ENCODE measurements at regions of chr20 and their contacts with region 1.

Region 1: GRCh38 chr20:63657937-63658748 is at the start of gene RTEL1:
- DNase-seq: peak; percentile 98
- total RNA-seq, gene RTEL1: 28.3 to 28.7 TPM

Region 2: GRCh38 chr20:63678667-63679427 is 20.7 kb after region 1 on chr20:
- intact Hi-C with region 1: loop called in 1 of 2 experiments (anchors 1 kb)
- DNase-seq: no peak

Region 3: DNA sequence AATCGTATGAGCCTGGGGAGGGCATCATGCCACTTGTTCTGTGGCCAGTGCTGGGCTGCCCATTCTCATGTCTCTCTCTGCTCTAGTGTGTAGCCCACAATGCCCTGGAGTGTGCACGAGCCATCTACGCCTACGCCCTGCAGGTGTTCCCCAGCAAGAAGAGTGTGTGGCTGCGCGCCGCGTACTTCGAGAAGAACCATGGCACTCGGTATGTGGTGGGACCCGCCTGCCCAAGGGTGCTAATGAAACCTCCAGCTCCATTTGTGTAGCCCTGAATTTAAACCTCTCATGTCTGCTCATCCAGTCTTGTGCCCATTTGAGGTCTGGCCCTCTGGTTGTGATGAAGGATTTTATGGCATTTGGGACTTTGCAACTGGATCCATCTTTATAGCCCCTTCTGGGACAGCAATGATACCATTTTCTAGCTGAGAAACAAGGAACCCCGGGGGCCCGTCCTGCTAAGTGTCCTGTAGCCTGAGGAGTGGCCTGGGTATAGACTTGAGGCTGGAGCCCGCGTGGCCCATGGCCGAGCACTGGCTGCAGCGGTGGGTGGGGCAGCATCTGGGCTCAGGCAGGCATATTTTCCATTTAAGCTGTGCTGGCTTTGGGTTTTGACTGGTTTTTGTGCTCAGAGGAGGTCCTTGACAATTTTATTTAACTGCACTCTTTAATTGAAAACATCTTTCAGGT is 364.7 kb after region 1 on chr20:
- intact Hi-C with region 1: no loop called
- DNase-seq: no peak

Measured in posterior vena cava (tissue), 2 donors.